ENCODE measurements at regions of chrX and their contacts with region 1.

Region 1: DNA sequence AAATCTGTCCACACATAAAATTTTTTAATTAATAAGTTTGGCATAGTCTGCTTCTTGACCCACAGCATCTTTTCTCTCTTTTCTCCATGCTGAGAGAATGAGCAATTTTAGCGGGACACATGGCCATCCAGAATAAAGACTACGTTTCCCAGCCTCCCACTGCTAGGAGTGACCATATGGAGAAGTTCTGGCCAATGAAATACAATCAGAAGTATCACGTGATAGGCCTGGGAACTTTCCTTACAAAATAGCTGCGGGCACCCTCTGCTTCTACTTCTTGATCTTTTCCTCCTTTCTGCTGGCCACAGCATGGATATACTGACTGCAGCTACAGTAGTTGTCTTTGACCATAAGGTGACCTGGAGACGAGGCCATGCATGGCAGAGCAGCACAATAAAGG is 348.0 kb downstream of the BCOR start:
- DNase-seq: peak; percentile 31

Region 2: GRCh38 chrX:38006291-38006690 is 1743.4 kb before region 1 on chrX and contains the start of gene SYTL5:
- intact Hi-C with region 1: no loop called
- DNase-seq: no peak
- total RNA-seq, gene SYTL5: 0.05 to 0.09 TPM

Region 3: DNA sequence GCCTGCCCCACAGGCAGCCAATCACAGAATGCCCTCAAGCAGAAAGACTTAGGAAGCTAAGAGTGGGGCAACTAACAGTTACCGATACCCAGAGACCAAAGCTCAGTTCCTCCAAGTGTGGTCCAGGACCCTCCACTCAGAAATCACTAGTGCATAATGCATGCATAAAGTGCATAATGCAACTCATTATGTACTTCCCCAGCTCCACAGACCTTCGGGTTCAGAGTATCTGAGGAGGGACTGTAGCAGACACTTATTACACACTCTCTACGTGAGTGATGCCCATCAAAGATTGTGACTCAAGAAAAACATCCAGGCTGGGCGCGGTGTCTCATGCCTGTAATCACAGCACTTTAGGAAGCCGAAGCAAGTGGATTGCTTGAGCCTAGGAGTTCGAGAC is 20.0 kb after region 1 on chrX:
- intact Hi-C with region 1: loop called in 1 of 2 experiments (anchors 1 kb)
- DNase-seq: no peak

Measured in posterior vena cava (tissue), 2 donors.